BJ (cell line): ENCODE measurements at regions of chr19 and their contacts with region 1.

Region 1: GRCh38 chr19:34974646-34975045 is 10.6 kb upstream of the ZNF792 start:
- DNase-seq: no peak
- H3K4me3 ChIP-seq: no peak overlapping the region
- H3K27me3 ChIP-seq: 0 out of 2 replicates have a peak, but pooled peaks cover 2% of the 10 kb centered on the region
- CTCF ChIP-seq: no peak

Region 2: GRCh38 chr19:34963573-34964409 is 10.9 kb before region 1 on chr19 and contains the start of gene ZNF792:
- CTCF ChIA-PET with region 1: interaction called, 31 read pairs
- POLR2A ChIA-PET with region 1: no interaction called
- DNase-seq: no peak
- H3K4me3 ChIP-seq: peak within 1 kb of the TSS; percentile 94
- H3K27me3 ChIP-seq: no peaks in the 10 kb centered on the region
- CTCF ChIP-seq: no peak
- polyA plus RNA-seq, gene ZNF792: 1.7 and 1.8 TPM in 2 replicates

Region 3: DNA sequence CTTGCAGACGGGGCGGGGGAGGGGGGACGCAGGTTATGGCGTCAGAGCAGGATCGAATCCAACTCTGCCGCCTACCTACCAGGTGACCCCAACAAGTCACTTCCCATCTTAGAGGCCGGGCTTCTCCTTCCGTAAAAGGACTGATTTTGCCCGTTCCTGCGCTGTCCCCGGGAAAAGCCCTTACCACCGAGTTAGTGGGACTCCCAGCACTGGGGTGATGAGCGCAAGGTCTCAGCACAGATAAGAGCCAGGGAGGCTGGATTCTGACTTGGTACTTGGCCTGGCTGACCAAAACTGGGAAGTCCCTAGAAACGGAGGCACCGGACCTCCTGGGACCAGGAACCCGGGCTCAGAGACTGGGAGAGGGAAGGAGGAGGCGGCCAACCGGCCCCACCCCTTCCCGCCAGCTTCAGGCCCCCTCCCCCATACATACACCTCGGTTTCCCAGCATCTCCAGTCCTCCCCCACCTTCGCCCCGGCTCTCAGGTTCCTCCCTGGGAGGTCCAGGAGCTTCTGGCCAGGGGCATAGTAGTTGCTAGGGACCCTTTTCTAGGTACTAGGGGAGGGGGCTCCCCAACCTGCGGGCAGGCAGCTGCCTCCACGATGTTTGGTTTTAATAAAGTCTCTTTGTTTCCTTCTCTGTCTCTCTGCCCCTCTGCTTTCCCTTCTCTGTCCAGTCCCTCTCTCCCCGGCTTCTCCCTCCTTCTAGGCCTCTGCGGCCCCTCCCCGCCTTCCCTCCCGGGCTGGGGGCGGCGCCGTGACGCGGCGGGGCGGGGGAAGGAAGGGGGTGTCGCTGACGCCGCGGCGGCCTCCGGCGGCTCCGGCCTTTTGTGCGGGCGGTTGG is 25.1 kb after region 1 on chr19 and contains the start of gene GRAMD1A:
- CTCF ChIA-PET with region 1: interaction called, 16 read pairs
- POLR2A ChIA-PET with region 1: no interaction called
- DNase-seq: peak; percentile 38
- H3K4me3 ChIP-seq: peak within 1 kb of the TSS; percentile 87
- H3K27me3 ChIP-seq: no peaks in the 10 kb centered on the region
- CTCF ChIP-seq: no peak
- polyA plus RNA-seq, gene GRAMD1A: 51.0 and 74.9 TPM in 2 replicates

Region 4: GRCh38 chr19:35013031-35013819 is 38.6 kb after region 1 on chr19:
- CTCF ChIA-PET with region 1: interaction called, 47 read pairs
- POLR2A ChIA-PET with region 1: no interaction called
- DNase-seq: no peak
- H3K4me3 ChIP-seq: no peak overlapping the region
- H3K27me3 ChIP-seq: no peaks in the 10 kb centered on the region
- CTCF ChIP-seq: peak; percentile 95

Region 5: DNA sequence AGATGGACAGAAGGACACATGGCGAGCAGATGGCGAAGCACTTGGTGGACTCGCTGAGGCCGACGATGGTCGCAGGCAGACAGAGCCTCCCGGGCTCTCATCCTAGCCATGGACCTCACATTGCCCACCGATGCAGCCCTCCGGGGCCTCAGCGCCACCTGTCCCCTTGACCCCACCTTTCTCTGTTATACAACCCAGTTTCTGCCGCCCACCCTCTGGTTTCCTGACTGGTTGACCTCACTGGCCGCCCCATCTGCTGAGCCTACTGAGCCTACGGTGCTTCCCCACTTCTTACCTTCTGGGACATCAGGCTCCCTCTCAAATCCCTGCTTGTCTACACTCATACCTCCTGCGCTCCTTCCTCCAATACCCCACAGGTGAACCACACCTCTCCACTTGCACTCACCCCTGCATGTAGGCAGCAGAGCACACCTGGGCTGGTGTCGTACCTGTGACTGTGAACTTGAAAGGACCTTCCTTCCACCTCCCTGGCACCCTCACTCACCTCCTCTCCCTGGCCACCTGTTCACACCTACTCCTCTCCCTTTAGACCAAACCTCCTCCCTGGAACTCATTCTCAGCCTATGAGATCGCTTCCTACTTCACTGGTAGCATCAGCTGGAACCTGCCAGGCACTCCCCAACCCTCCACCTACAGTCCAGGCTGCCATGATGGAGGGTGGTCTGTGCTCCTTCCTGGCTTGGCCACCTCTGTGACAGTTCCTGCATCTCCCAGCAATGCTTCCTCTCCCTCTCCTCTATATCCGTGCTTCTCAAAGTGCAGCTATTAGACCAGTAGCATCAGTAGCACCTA is 103.0 kb after region 1 on chr19:
- CTCF ChIA-PET with region 1: no interaction called
- POLR2A ChIA-PET with region 1: no interaction called
- DNase-seq: no peak
- H3K4me3 ChIP-seq: no peak overlapping the region
- H3K27me3 ChIP-seq: peaks cover 1% of the 10 kb centered on the region; the same call in 1 of the 2 replicates
- CTCF ChIP-seq: no peak